ENCODE measurements at regions of chr11 and their contacts with region 1.

Region 1: DNA sequence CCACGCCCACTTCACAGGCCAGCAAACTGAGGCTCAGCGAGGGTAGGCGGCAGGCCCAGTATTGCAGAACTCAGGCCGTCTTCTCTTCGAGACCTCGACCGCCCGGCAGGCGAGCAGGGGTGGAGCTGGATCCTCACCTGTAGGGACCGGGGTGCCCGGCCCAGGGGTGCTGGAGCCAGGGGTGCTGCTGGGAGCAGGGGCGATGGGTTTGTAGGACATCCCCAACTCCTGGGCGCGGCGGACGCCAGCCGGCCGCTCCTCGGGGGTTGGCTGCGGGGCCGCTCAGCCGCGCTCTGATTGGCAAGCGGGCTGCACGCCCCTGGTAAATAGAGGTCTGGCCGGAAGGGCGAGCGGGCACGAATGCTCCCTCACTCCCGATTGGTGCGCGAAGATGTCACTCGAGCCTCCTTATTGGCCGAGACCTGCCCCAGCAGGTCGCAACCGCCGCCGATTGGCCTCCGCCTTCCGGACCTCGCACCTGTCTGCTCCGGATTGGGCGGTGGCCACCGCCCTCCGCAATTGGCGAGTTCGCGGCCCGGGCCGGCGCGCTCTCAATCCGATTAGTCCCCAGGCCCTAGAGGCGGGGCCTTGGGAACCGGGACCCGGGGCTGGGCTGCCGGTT is at the start of gene CDK2AP2:
- DNase-seq: peak; percentile 99
- H3K4me3 Mint-ChIP-seq: peak within 1 kb of the TSS; percentile 85
- H3K27ac Mint-ChIP-seq: peak within 1 kb of the TSS; percentile 97
- H3K4me1 Mint-ChIP-seq: peaks cover 35% of the 10 kb centered on the region
- H3K27me3 Mint-ChIP-seq: no peaks in the 10 kb centered on the region
- total RNA-seq, gene CDK2AP2: 53.7 to 55.1 TPM

Region 2: GRCh38 chr11:67118801-67119584 is 389.0 kb before region 1 on chr11 and contains the start of gene KDM2A:
- CTCF ChIA-PET with region 1: no interaction called
- intact Hi-C with region 1: loop called (anchors 10 kb)
- DNase-seq: peak; percentile 99
- H3K4me3 Mint-ChIP-seq: peak within 1 kb of the TSS; percentile 97
- H3K27ac Mint-ChIP-seq: peak within 1 kb of the TSS; percentile 92
- H3K4me1 Mint-ChIP-seq: peaks cover 41% of the 10 kb centered on the region
- H3K27me3 Mint-ChIP-seq: no peaks in the 10 kb centered on the region
- total RNA-seq, gene KDM2A: 57.7 to 58.8 TPM

Region 3: DNA sequence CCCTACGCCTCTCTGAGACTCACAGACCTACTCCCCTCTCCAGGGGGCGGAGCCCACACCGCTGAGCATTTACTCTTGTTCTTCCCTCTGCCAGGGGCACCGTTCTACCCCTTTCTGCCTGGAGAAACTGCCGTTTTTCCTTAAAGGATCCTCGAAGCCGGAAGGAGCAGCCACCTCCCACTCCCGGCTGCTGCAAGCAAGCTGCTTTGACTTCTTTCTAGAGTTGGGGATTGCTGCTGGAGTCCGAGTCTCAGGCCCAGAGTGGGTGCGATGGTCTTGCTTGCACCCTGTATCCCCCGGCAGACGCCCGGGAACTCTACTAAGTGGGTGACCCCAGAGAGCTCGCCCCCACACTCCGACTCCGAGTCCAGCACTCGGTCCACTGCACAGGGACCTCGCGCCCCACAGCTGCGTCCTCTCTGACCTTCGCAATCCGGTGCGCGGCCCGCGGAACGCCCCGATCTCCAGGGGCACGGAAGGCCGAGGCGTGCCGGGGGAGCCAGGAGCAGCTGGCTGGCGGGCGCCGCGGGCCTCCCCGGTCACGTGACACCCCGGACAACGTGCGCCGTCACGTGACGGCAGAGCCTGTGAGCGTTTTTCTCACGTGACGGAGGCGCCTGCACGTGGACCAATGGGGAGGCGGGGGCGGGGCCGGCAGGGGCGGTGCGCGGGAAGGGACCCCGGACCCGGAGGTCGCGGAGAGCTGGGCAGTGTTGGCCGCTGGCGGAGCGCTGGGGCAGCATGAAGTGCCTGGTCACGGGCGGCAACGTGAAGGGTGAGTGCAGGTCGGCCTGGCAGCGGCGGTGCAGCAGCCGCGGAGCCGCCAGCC is 116.5 kb before region 1 on chr11 and contains the start of gene RAD9A:
- CTCF ChIA-PET with region 1: no interaction called
- intact Hi-C with region 1: loop called (anchors 1 kb)
- DNase-seq: peak; percentile 93
- H3K4me3 Mint-ChIP-seq: peak within 1 kb of the TSS; percentile 86
- H3K27ac Mint-ChIP-seq: peak within 1 kb of the TSS; percentile 51
- H3K4me1 Mint-ChIP-seq: peaks cover 31% of the 10 kb centered on the region
- H3K27me3 Mint-ChIP-seq: no peaks in the 10 kb centered on the region
- total RNA-seq, gene RAD9A: 29.5 to 30.7 TPM

Region 4: DNA sequence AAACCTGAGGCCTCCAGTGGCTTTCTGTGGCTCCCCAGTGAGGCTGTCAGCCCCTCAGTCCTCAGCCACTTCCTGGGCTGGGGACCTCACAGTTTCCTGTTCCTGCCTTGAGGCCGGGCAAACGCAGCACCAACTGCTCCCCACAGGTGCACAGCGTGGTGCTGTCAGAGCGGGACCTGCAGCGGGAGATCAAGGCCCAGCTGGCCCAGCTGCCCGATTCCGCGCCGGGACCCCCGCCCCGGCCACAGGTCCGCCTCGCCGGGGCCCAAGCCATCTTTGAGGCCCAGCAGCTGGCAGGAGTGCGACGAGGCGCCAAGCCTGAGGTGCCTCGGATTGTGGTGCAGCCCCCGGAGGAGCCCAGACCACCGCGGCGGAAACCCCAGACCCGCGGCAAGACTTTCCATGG is 98.7 kb before region 1 on chr11:
- CTCF ChIA-PET with region 1: interaction called, 3 read pairs
- intact Hi-C with region 1: loop called (anchors 1 kb)
- DNase-seq: peak; percentile 87
- H3K4me3 Mint-ChIP-seq: peak overlapping the region; percentile 83
- H3K27ac Mint-ChIP-seq: peak overlapping the region; percentile 96
- H3K4me1 Mint-ChIP-seq: peaks cover 79% of the 10 kb centered on the region
- H3K27me3 Mint-ChIP-seq: no peaks in the 10 kb centered on the region

Region 5: DNA sequence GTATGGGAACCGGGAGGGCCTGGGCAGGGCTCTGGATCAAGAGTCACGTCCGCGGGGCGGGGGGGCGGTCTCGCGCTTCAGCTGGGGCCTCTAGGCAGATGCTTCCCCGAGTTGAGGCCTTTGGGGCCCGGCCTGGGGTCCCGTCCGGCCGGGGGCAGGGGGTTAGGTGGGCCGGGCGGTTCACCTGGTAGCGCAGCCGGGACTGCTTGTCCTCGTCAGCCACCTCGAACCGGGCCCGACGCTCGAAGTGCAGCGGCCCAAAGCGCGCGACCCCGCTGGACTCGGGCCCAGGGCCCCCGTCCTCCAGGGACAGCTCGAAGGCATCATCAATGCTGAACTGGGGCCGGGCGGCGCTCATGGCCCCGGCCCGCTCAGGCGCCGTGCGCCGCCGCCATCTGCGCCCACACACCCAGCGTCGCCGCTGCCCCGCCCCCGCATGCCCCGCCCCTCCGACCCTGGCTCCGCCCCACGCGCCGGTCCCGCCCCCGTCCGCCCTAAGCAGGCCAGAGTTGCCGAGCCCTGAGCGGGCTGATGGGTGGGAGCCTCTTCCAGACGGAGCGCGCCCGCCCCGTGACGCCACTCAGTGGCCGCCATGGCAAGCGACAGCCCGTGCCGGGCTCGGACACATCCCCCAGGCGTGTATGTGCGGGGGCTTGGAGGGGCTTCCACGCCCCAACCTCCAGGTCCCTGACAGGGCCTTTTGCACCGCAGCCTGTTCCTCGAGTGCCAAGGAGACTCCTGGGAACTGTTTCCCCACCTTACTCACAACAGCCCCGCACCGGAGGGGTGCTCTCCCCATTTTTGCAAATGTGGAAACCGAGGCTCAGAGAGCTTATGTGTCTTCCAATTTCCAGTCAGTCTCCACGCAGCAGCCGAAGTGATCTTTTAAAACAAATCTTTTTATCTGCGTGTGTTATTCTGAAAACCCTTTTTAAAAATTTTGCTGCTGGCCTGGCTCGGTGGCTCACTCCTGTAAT is 38.9 kb before region 1 on chr11 and contains the start of gene TMEM134:
- CTCF ChIA-PET with region 1: interaction called, 6 read pairs
- intact Hi-C with region 1: loop called (anchors 1 kb)
- DNase-seq: peak; percentile 92
- H3K4me3 Mint-ChIP-seq: peak within 1 kb of the TSS; percentile 80
- H3K27ac Mint-ChIP-seq: peak within 1 kb of the TSS; percentile 86
- H3K4me1 Mint-ChIP-seq: peaks cover 33% of the 10 kb centered on the region
- H3K27me3 Mint-ChIP-seq: no peaks in the 10 kb centered on the region
- total RNA-seq, gene TMEM134: 52.6 to 56.1 TPM

Region 6: GRCh38 chr11:67583247-67584204 is 75.6 kb after region 1 on chr11 and contains the start of gene GSTP1:
- CTCF ChIA-PET with region 1: no interaction called
- intact Hi-C with region 1: loop called (anchors 2 kb)
- DNase-seq: peak; percentile 81
- H3K4me3 Mint-ChIP-seq: peak within 1 kb of the TSS; percentile 94
- H3K27ac Mint-ChIP-seq: peak within 1 kb of the TSS; percentile 85
- H3K4me1 Mint-ChIP-seq: peaks cover 47% of the 10 kb centered on the region
- H3K27me3 Mint-ChIP-seq: peaks cover 3% of the 10 kb centered on the region
- total RNA-seq, gene GSTP1: 398 to 403 TPM

Region 7: GRCh38 chr11:67674442-67674901 is 166.5 kb after region 1 on chr11 and contains the start of gene ALDH3B2:
- CTCF ChIA-PET with region 1: no interaction called
- intact Hi-C with region 1: no loop called
- DNase-seq: no peak
- H3K4me3 Mint-ChIP-seq: no peak within 1 kb of the TSS
- H3K27ac Mint-ChIP-seq: no peak within 1 kb of the TSS
- H3K4me1 Mint-ChIP-seq: no peaks in the 10 kb centered on the region
- H3K27me3 Mint-ChIP-seq: no peaks in the 10 kb centered on the region
- total RNA-seq, gene ALDH3B2: not detected

Region 8: GRCh38 chr11:68030318-68031138 is 522.6 kb after region 1 on chr11 and contains the start of gene NDUFS8:
- CTCF ChIA-PET with region 1: no interaction called
- intact Hi-C with region 1: loop called (anchors 10 kb)
- DNase-seq: peak; percentile 98
- H3K4me3 Mint-ChIP-seq: peak within 1 kb of the TSS; percentile 91
- H3K27ac Mint-ChIP-seq: peak within 1 kb of the TSS; percentile 88
- H3K4me1 Mint-ChIP-seq: peaks cover 23% of the 10 kb centered on the region
- H3K27me3 Mint-ChIP-seq: no peaks in the 10 kb centered on the region
- total RNA-seq, gene NDUFS8: 142 to 162 TPM